Activated B cell treated with CpG ODN at 0.5 μM for 24 hours (primary cell): ENCODE measurements at regions of chr11 and their contacts with region 1.

Region 1: DNA sequence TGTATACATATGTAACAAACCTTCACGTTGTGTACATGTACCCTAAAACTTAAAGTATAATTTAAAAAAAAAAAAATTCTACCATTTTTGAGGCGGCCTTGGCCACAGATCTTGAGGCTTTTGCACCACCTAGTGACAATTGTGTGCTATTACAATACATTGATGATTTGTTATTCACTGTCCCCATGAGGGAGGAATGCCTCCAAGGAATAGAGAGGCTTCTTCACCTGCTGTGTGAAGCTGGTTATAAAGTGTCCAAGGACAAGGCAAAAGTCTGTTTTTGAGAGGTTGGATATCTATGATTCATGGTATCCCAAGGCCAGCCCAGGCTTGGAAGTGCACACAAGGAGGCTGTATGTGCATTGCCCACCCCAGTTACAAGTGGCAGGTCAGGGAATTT is 30.7 kb downstream of the SLC22A25 start:
- DNase-seq: no peak
- ATAC-seq: no peak
- H3K4me3 Mint-ChIP-seq: no peak overlapping the region
- H3K27ac Mint-ChIP-seq: no peak overlapping the region
- H3K4me1 Mint-ChIP-seq: no peaks in the 10 kb centered on the region
- H3K27me3 Mint-ChIP-seq: peaks cover 22% of the 10 kb centered on the region
- CTCF ChIP-seq: no peak

Region 2: GRCh38 chr11:63042596-63042995 is 170.1 kb before region 1 on chr11:
- CTCF ChIA-PET with region 1: no interaction called
- POLR2A ChIA-PET with region 1: no interaction called
- intact Hi-C with region 1: loop called (anchors 5 kb)
- DNase-seq: no peak
- ATAC-seq: no peak
- H3K4me3 Mint-ChIP-seq: no peak overlapping the region
- H3K27ac Mint-ChIP-seq: no peak overlapping the region
- H3K4me1 Mint-ChIP-seq: no peaks in the 10 kb centered on the region
- H3K27me3 Mint-ChIP-seq: peaks cover 24% of the 10 kb centered on the region
- CTCF ChIP-seq: no peak

Region 3: DNA sequence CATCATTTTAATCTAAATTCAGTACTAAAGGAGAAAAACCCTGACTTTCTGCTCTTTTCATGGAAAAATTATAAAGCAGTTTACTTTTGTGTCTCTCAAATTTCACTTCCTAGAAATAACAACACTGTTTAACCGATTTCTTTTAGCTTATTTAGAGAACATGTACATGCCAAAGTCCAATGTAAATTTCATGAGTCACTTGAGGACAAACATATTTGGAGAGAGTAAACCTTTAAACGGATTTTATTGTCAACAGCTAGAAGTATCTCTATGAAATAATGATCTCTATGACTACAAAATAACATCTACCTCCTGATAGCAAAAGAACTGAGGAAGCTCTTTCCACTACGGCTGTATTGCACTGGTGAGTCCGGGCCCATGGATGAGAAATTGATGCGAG is 76.9 kb after region 1 on chr11:
- CTCF ChIA-PET with region 1: no interaction called
- POLR2A ChIA-PET with region 1: no interaction called
- intact Hi-C with region 1: no loop called
- DNase-seq: no peak
- ATAC-seq: no peak
- H3K4me3 Mint-ChIP-seq: no peak overlapping the region
- H3K27ac Mint-ChIP-seq: no peak overlapping the region
- H3K4me1 Mint-ChIP-seq: no peaks in the 10 kb centered on the region
- H3K27me3 Mint-ChIP-seq: peaks cover 21% of the 10 kb centered on the region
- CTCF ChIP-seq: no peak

Region 4: GRCh38 chr11:63476618-63477017 is 263.9 kb after region 1 on chr11:
- CTCF ChIA-PET with region 1: no interaction called
- POLR2A ChIA-PET with region 1: no interaction called
- intact Hi-C with region 1: no loop called
- DNase-seq: no peak
- ATAC-seq: no peak
- H3K4me3 Mint-ChIP-seq: no peak overlapping the region
- H3K27ac Mint-ChIP-seq: no peak overlapping the region
- H3K4me1 Mint-ChIP-seq: no peaks in the 10 kb centered on the region
- H3K27me3 Mint-ChIP-seq: peaks cover 19% of the 10 kb centered on the region
- CTCF ChIP-seq: no peak